ENCODE measurements at regions of chr7 and their contacts with region 1.

Region 1: DNA sequence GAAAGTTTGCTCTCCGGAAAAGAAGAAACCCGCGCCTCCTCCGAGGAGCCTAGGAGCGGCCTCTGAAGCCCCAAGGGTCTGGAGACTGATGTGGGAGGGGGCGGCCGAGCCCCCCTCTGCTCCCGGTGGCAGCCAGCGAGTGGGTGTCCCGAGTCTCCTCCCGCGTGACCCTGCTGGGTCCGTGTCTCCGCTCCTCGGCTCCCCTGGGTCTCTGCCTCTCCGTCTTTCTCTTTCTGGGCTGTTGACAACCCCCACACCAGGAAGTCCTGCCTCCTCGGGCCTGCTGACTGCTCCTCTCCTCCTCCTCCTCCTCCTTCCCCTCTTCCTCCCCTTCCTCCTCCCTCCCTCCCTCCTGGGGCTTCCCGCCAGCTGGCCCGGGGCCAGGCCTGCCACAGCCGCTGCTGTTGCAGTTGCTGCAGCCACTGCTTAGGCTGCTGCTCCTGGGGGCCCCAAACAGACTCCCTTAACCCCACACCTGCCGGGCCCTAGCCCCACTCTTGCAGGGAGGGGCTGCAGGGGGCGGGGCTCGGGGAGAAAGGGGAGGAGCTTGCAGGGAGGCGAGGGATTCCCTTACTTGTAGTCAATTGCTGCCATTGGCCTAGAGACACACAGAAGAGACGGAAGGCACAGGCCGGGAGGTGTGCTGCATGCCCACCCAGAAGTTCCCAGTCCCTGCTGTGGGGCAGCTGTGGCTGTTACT is at the start of gene TSC22D4:
- DNase-seq: peak; percentile 92 to 99 (median 97)

Region 2: GRCh38 chr7:100008525-100008924 is 470.6 kb before region 1 on chr7:
- intact Hi-C with region 1: no loop called
- DNase-seq: no peak

Region 3: GRCh38 chr7:100435401-100436304 is 43.5 kb before region 1 on chr7:
- intact Hi-C with region 1: loop called (anchors 5 kb)
- DNase-seq: peak in 31 of 42 donors; percentile 19 to 67 (median 33)

Region 4: GRCh38 chr7:100539436-100540006 is 60.4 kb after region 1 on chr7:
- intact Hi-C with region 1: loop called (anchors 5 kb)
- DNase-seq: peak in 2 of 42 donors; percentile 14 to 27

Region 5: GRCh38 chr7:100568896-100569844 is 90.1 kb after region 1 on chr7:
- intact Hi-C with region 1: loop called (anchors 5 kb)
- DNase-seq: peak in 41 of 42 donors; percentile 34 to 85 (median 71)

Region 6: GRCh38 chr7:100680167-100680575 is 201.1 kb after region 1 on chr7:
- intact Hi-C with region 1: loop called (anchors 10 kb)
- DNase-seq: peak in 15 of 42 donors; percentile 13 to 73 (median 41)

Region 7: GRCh38 chr7:100974018-100974417 is 494.9 kb after region 1 on chr7:
- intact Hi-C with region 1: no loop called
- DNase-seq: no peak

Measured in head of caudate nucleus (tissue), 42 donors.